ENCODE measurements at regions of chr22 and their contacts with region 1.

Region 1: GRCh38 chr22:37244114-37244921 is at the start of gene RAC2:
- DNase-seq: peak; percentile 96
- H3K4me3 Mint-ChIP-seq: peak within 1 kb of the TSS; percentile 99
- H3K27ac Mint-ChIP-seq: peak within 1 kb of the TSS; percentile 99
- H3K4me1 Mint-ChIP-seq: peaks cover 42% of the 10 kb centered on the region
- H3K27me3 Mint-ChIP-seq: no peaks in the 10 kb centered on the region
- total RNA-seq, gene RAC2: 714 to 727 TPM

Region 2: DNA sequence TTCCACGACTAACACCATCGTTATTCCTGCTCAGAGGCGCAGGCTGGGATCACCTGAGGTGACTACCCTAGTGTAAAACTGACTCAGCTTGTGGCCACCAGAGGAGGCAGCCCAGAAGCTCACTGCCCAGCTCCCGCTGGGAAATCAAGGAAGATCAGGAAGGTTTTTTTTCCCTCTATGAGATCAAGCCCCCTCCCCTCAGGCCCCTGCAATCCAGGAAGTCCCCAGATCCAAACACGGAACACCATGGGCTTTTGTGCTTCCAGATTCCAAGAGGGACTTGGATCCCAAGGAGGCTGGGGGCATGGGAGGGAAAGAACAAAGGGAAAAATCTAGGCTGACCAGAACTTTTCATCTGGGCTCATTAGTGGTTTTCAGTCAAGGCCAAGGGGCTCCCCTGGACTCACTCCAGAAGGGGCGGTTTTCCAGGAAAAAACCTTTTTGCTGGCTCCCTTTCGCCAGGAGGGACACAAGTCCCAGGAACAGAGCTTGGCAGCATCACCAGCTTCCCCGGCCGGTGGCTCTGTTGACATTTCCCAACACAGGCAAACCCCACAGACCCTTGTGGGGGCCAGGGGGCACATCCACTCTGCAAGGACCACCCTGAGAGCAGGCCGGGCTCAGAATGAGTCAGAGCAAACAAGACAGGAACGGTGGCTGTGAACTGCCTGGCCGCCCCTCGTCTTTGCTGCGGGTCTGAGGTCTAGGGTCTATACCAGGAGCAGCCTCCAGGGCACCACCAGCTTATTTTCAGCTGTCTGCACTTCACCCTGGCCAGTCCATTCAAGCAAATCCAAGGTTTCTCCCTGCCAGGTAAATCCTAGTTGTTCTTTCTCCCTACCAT is 893.3 kb before region 1 on chr22:
- CTCF ChIA-PET with region 1: no interaction called
- POLR2A ChIA-PET with region 1: no interaction called
- intact Hi-C with region 1: loop called (anchors 10 kb)
- DNase-seq: no peak
- H3K4me3 Mint-ChIP-seq: no peak overlapping the region
- H3K27ac Mint-ChIP-seq: peak overlapping the region; percentile 94
- H3K4me1 Mint-ChIP-seq: peaks cover 88% of the 10 kb centered on the region
- H3K27me3 Mint-ChIP-seq: no peaks in the 10 kb centered on the region

Region 3: GRCh38 chr22:37133304-37134018 is 110.9 kb before region 1 on chr22:
- CTCF ChIA-PET with region 1: no interaction called
- POLR2A ChIA-PET with region 1: no interaction called
- intact Hi-C with region 1: no loop called
- DNase-seq: no peak
- H3K4me3 Mint-ChIP-seq: no peak overlapping the region
- H3K27ac Mint-ChIP-seq: peak overlapping the region; percentile 74
- H3K4me1 Mint-ChIP-seq: peaks cover 24% of the 10 kb centered on the region
- H3K27me3 Mint-ChIP-seq: no peaks in the 10 kb centered on the region

Region 4: GRCh38 chr22:37148742-37149665 is 95.3 kb before region 1 on chr22:
- CTCF ChIA-PET with region 1: interaction called, 3 read pairs
- POLR2A ChIA-PET with region 1: interaction called, 14 read pairs
- intact Hi-C with region 1: loop called (anchors 5 kb)
- DNase-seq: no peak
- H3K4me3 Mint-ChIP-seq: peak overlapping the region; percentile 95
- H3K27ac Mint-ChIP-seq: peak overlapping the region; percentile 95
- H3K4me1 Mint-ChIP-seq: peaks cover 56% of the 10 kb centered on the region
- H3K27me3 Mint-ChIP-seq: no peaks in the 10 kb centered on the region

Region 5: DNA sequence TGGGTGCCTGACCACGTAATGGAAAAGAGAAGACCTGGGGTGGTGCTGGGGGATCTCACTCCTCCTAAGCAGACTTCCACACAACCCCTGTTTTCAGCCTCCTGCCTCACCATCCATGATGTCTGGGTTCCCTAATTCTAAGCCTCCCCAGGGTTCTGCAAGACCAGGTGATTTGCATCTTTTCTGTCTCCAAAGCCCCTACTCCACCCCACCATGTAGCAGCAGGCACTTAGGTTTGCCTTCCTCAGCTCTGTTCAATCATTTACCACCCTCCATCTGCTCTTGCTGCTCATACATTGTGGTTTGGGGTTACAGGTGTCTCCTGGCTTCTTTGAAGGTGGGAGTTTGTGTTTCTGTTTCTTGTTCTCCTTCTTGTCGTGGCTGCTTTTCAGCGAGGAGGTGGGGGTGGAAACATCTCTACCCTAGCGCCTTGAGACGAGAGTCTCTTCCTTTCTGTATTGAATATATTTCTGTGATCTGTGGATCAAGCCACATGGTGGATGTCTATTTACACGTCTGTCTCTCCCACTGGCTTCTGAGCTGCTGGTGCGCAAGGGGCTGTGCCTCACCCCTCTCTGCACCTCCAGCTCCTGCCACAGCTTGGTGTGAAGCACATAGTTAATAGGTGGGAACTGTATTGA is 25.4 kb before region 1 on chr22:
- CTCF ChIA-PET with region 1: interaction called, 11 read pairs
- POLR2A ChIA-PET with region 1: interaction called, 93 read pairs
- intact Hi-C with region 1: loop called (anchors 1 kb)
- DNase-seq: peak; percentile 85
- H3K4me3 Mint-ChIP-seq: peak overlapping the region; percentile 76
- H3K27ac Mint-ChIP-seq: peak overlapping the region; percentile 95
- H3K4me1 Mint-ChIP-seq: peaks cover 76% of the 10 kb centered on the region
- H3K27me3 Mint-ChIP-seq: no peaks in the 10 kb centered on the region

Region 6: DNA sequence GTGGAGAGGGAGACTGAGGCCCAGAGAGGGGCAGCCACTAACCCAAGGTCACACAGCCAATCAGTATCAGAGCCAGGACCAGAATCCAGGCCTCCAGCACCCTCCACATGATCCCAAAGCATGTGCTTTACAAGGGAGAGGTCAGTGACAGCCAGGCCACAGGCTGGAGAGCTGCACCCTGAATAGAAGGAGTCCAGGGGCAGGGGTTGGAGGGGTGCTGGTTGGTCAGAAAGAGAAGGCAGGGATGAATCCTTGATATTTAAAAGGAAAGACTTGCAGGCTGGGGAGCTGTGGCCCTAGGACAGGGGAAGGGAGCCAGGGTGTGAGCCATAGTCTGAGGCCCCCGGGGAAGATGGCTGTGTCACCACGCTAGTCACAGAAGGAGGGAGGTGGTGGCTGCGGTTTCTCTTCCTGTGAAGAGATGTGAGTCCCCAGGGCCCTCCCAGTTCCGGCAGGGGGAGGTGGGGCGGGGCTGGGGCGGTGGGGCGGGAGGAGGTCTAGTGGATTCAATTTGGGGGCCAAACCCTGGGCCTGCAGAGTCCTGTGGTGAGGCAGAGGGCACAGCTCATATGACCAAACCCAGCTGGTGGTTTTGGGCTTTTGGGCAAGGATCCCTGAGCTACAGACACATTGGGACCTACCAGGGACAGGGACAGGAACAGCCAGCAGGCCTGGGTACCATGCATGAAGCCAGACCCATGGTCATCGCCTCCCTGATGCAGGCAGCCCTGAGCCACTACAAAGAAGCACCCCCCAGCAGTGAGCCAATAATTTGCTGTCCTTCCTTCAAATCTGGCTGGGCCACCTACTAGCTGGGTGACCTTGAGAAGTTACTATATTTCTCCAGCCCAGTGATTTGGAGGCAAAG is 14.3 kb before region 1 on chr22:
- CTCF ChIA-PET with region 1: interaction called, 56 read pairs
- POLR2A ChIA-PET with region 1: interaction called, 191 read pairs
- intact Hi-C with region 1: loop called (anchors 1 kb)
- DNase-seq: peak; percentile 97
- H3K4me3 Mint-ChIP-seq: peak overlapping the region; percentile 67
- H3K27ac Mint-ChIP-seq: peak overlapping the region; percentile 98
- H3K4me1 Mint-ChIP-seq: peaks cover 90% of the 10 kb centered on the region
- H3K27me3 Mint-ChIP-seq: no peaks in the 10 kb centered on the region

Region 7: GRCh38 chr22:37282385-37282677 is 38.0 kb after region 1 on chr22 and contains the start of gene CYTH4:
- CTCF ChIA-PET with region 1: no interaction called
- POLR2A ChIA-PET with region 1: interaction called, 10 read pairs
- intact Hi-C with region 1: no loop called
- DNase-seq: peak; percentile 89
- H3K4me3 Mint-ChIP-seq: peak within 1 kb of the TSS; percentile 82
- H3K27ac Mint-ChIP-seq: peak within 1 kb of the TSS; percentile 94
- H3K4me1 Mint-ChIP-seq: peaks cover 48% of the 10 kb centered on the region
- H3K27me3 Mint-ChIP-seq: peaks cover 2% of the 10 kb centered on the region
- total RNA-seq, gene CYTH4: 58.7 to 60.5 TPM